ENCODE measurements at regions of chr1 and their contacts with region 1.

Region 1: DNA sequence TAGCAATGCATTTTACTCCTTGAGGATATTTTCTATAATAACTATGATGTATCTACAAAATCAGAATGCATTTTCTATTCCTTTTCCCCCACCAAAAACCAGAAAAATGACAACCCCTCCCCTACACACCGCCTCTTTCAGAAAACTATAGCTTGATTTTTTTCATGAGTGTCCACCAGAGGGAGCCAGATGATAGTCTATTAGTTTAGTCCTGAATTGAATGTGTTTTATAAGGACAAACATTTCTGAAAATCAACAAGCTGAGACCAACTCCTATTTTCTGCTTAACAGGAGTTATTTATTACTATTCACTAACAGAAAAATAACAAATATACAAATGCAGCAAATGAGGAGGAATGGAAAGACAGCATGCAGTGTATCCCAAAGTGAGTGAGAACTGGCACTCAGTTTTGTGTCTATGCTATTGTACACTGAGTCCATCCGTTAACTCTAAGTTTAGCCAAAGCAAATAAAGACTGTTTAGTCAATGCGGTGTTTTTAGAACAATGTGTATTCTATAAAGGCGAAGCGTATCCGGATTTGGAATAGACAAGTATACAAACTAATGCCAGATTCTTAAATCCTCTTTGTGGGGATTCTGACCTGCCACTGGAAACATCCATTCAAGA is 182.6 kb downstream of the VAV3 start:
- DNase-seq: no peak
- ATAC-seq: peak; percentile 65 to 70
- H3K4me3 ChIP-seq: no peak overlapping the region
- H3K27ac ChIP-seq: no peak overlapping the region
- H3K4me1 ChIP-seq: no peaks in the 10 kb centered on the region
- H3K27me3 ChIP-seq: no peaks in the 10 kb centered on the region
- CTCF ChIP-seq: peak; percentile 59 to 75 (median 67)
- POLR2A ChIP-seq: no peak

Region 2: GRCh38 chr1:107750358-107750959 is 31.9 kb before region 1 on chr1:
- in situ Hi-C with region 1: no loop called
- intact Hi-C with region 1: no loop called
- DNase-seq: no peak
- ATAC-seq: no peak
- H3K4me3 ChIP-seq: no peak overlapping the region
- H3K27ac ChIP-seq: no peak overlapping the region
- H3K4me1 ChIP-seq: no peaks in the 10 kb centered on the region
- H3K27me3 ChIP-seq: no peaks in the 10 kb centered on the region
- CTCF ChIP-seq: peak in 1 of 5 experiments; percentile 36
- POLR2A ChIP-seq: no peak

Region 3: GRCh38 chr1:107949467-107950253 is 167.3 kb after region 1 on chr1:
- in situ Hi-C with region 1: no loop called
- intact Hi-C with region 1: loop called (anchors 10 kb)
- DNase-seq: no peak
- ATAC-seq: no peak
- H3K4me3 ChIP-seq: no peak overlapping the region
- H3K27ac ChIP-seq: no peak overlapping the region
- H3K4me1 ChIP-seq: peaks cover 10 to 14% of the 10 kb centered on the region in 2 donors
- H3K27me3 ChIP-seq: no peaks in the 10 kb centered on the region
- CTCF ChIP-seq: no peak
- POLR2A ChIP-seq: no peak